ENCODE measurements at regions of chr3 and their contacts with region 1.

Region 1: DNA sequence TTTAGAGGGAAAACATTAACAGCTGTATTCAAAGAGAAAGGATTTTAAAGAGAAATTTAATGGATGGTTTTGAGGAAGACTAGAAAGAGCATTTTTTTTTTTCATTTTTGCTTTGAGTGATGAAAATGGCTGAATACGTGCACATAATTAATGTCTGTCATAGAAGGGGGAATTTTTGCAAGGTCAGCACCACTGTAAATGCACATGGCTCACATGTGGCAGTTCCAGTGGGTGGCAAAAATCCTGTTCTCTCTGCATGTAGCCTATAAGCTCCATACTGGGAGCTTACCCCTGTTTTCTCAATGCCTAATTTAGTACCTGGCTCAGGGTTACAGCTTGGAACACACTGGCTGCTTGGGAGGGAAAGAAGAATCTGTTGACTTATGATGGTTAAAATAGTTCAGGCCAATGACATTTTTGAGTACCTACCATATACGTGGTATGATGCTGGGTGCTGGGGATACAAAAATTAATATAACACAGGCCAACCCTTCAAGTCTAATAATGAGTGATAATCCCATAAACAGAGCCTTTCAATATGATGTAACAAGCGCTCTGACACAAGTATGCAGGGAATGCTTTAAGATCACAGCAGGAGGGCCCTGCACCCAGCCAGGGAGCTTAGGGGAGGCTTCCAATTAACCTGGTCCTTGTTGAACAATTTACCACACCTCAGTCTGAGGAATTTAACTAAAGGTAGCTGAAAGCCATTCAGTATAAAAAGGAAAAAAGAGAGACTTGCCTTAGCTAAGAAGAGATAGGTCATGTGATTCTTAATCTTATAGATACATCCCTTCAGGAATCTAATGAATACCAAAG is 33.0 kb downstream of the HSPBAP1 start:
- DNase-seq: peak; percentile 58
- H3K4me3 ChIP-seq: no peak overlapping the region
- H3K27ac ChIP-seq: no peak overlapping the region
- H3K4me1 ChIP-seq: peaks cover 15% of the 10 kb centered on the region
- H3K27me3 ChIP-seq: no peaks in the 10 kb centered on the region
- CTCF ChIP-seq: no peak

Region 2: DNA sequence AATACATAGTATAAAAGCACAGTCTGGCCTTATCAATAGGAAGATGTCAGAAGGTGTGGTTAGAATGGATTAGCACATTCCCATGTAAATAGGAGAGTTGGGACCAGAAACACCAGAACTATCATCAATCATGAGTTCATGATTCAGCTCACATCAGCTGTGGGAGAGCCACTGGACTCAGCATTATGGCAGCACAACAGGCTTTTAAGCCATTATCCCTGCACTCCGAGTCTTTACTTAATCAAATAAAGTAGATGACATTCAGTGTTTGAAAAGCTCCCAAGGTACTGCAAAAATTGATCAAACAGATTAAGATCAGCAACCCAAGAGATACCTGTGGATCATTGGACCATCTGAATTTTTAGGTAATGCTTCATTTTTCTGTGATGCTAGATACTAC is 55.3 kb before region 1 on chr3:
- CTCF ChIA-PET with region 1: no interaction called
- POLR2A ChIA-PET with region 1: no interaction called
- intact Hi-C with region 1: no loop called
- DNase-seq: no peak
- H3K4me3 ChIP-seq: no peak overlapping the region
- H3K27ac ChIP-seq: no peak overlapping the region
- H3K4me1 ChIP-seq: no peaks in the 10 kb centered on the region
- H3K27me3 ChIP-seq: no peaks in the 10 kb centered on the region
- CTCF ChIP-seq: no peak

Region 3: GRCh38 chr3:123307064-123307463 is 546.4 kb after region 1 on chr3:
- CTCF ChIA-PET with region 1: interaction called, 11 read pairs
- POLR2A ChIA-PET with region 1: no interaction called
- intact Hi-C with region 1: no loop called
- DNase-seq: no peak
- H3K4me3 ChIP-seq: no peak overlapping the region
- H3K27ac ChIP-seq: no peak overlapping the region
- H3K4me1 ChIP-seq: no peaks in the 10 kb centered on the region
- H3K27me3 ChIP-seq: peaks cover 3% of the 10 kb centered on the region
- CTCF ChIP-seq: no peak